Right ventricle myocardium inferior (tissue), 1 donor: ENCODE measurements at regions of chr1 and their contacts with region 1.

Region 1: DNA sequence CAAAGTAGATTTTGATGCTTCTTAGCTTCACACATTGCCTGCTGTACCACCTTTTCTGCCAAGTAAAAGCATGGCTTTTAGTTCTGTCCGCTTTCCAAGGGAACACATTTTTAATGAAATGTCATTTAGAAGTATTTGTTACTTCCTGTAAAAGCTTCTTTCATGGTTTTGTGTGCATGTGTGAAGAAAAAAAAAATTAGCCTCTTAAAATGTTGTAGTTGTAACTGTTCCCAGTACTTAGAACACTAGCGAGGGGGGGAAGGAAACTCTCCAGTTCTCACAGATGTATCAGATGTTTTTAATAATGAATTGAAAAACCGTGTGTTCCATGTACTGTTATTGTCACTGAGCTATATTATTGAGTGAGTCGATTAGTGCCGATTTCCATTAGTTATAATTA is 568.3 kb upstream of the ADGRL2 start:
- DNase-seq: no peak
- ATAC-seq: no peak

Region 2: GRCh38 chr1:80462006-80462405 is 770.4 kb before region 1 on chr1:
- intact Hi-C with region 1: no loop called
- DNase-seq: no peak
- ATAC-seq: no peak

Region 3: GRCh38 chr1:80988926-80989325 is 243.5 kb before region 1 on chr1:
- intact Hi-C with region 1: no loop called
- DNase-seq: no peak
- ATAC-seq: no peak

Region 4: GRCh38 chr1:81471255-81471654 is 238.8 kb after region 1 on chr1:
- intact Hi-C with region 1: loop called (anchors 5 kb)
- DNase-seq: no peak
- ATAC-seq: no peak